Activated CD4-positive, alpha-beta memory T cell treated with anti-CD3 and anti-CD28 coated beads for 36 hours (primary cell): ENCODE measurements at regions of chr12 and their contacts with region 1.

Region 1: DNA sequence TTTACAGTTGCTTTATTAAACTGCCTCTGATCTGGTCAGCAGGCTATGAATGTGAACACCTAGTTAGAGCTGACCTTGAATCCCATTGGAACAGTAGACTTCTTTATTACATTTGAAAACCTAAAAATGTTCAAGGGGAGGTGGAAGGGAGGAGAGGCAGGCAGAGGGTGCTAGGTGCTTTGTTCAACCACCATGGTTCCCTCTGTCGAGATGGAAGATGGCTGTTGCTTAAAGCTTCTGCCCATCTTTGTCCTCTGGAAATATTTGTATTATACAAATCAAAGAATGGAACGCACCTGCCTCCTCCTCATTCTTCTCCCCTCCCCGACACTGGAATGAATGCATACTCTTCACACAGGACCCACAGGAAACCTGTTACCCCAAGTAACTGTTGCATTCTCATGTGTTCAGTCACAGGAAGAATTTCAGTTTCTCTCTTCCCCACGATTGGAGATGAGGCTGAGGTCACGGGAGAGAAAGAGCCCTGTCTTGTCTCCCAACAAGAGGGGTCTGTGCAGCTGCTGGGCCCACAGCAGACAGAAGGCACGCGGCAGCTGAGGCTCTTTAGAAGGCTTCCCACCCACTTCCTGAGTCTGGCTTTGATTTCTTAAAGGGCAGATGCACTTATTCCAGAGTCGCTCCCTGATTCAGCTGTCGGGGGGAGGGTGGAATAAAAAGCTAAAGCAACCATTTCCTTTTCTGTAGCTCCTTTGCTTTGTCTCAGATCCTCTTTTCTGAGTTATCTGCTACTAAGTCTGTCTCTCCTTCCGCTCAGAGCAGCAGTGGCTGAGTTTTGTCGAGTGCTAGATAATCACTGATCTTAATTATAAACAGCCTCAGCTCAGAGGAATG is 217.9 kb upstream of the BTG1 start:
- DNase-seq: peak; percentile 55
- H3K4me3 Mint-ChIP-seq: peak overlapping the region; percentile 74
- H3K27ac Mint-ChIP-seq: peak overlapping the region; percentile 87
- H3K4me1 Mint-ChIP-seq: peaks cover 56% of the 10 kb centered on the region
- H3K27me3 Mint-ChIP-seq: no peaks in the 10 kb centered on the region

Region 2: GRCh38 chr12:92185052-92185451 is 178.5 kb before region 1 on chr12:
- CTCF ChIA-PET with region 1: no interaction called
- POLR2A ChIA-PET with region 1: no interaction called
- intact Hi-C with region 1: no loop called
- DNase-seq: peak; percentile 49
- H3K4me3 Mint-ChIP-seq: no peak overlapping the region
- H3K27ac Mint-ChIP-seq: peak overlapping the region; percentile 47
- H3K4me1 Mint-ChIP-seq: peaks cover 46% of the 10 kb centered on the region
- H3K27me3 Mint-ChIP-seq: no peaks in the 10 kb centered on the region

Region 3: GRCh38 chr12:92218394-92219077 is 145.0 kb before region 1 on chr12:
- CTCF ChIA-PET with region 1: no interaction called
- POLR2A ChIA-PET with region 1: no interaction called
- intact Hi-C with region 1: loop called (anchors 1 kb)
- DNase-seq: no peak
- H3K4me3 Mint-ChIP-seq: no peak overlapping the region
- H3K27ac Mint-ChIP-seq: peak overlapping the region; percentile 74
- H3K4me1 Mint-ChIP-seq: peaks cover 23% of the 10 kb centered on the region
- H3K27me3 Mint-ChIP-seq: no peaks in the 10 kb centered on the region

Region 4: DNA sequence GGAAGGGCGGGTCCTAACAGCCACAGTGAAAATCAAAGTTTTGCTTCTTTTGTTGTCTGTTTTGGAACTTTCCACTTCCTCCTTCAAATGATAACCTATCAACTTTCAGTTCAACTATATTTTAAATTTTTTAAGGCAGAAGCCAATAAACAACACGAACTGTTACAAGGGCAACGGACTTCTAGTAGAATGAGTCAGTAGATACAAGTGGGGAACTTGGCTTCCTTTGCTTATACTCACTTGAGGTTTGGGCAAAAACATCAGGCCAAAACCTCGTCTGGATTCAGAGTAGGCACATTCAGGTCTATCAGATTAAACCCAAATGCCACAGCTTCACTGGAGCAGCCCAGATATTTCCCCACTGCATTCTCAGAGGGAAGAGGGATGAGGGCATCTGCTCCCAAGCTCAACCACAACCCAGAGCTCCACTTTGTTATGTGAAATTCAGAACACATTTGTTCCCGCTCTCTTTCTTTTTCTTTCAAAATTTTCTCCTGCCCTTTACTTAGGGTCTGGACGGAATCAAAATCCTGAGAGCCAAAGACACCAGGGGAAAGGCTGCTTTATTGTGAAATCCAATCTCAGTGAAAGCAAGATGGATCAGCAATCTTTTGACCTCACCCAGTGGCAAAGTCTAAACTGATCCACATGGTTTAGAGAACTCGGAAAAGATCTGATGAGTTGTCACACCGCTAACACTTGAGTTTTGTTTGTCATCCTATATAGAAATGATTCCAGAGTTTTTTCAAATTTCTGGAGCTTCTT is 65.4 kb before region 1 on chr12:
- CTCF ChIA-PET with region 1: no interaction called
- POLR2A ChIA-PET with region 1: no interaction called
- intact Hi-C with region 1: loop called (anchors 5 kb)
- DNase-seq: peak; percentile 26
- H3K4me3 Mint-ChIP-seq: peak overlapping the region; percentile 30
- H3K27ac Mint-ChIP-seq: peak overlapping the region; percentile 79
- H3K4me1 Mint-ChIP-seq: peaks cover 13% of the 10 kb centered on the region
- H3K27me3 Mint-ChIP-seq: no peaks in the 10 kb centered on the region

Region 5: GRCh38 chr12:92396647-92397252 is 33.2 kb after region 1 on chr12:
- CTCF ChIA-PET with region 1: no interaction called
- POLR2A ChIA-PET with region 1: interaction called, 6 read pairs
- intact Hi-C with region 1: loop called (anchors 1 kb)
- DNase-seq: peak; percentile 61
- H3K4me3 Mint-ChIP-seq: no peak overlapping the region
- H3K27ac Mint-ChIP-seq: peak overlapping the region; percentile 86
- H3K4me1 Mint-ChIP-seq: peaks cover 90% of the 10 kb centered on the region
- H3K27me3 Mint-ChIP-seq: no peaks in the 10 kb centered on the region

Region 6: GRCh38 chr12:92469837-92470236 is 106.3 kb after region 1 on chr12:
- CTCF ChIA-PET with region 1: no interaction called
- POLR2A ChIA-PET with region 1: no interaction called
- intact Hi-C with region 1: loop called (anchors 2 kb)
- DNase-seq: no peak
- H3K4me3 Mint-ChIP-seq: no peak overlapping the region
- H3K27ac Mint-ChIP-seq: peak overlapping the region; percentile 83
- H3K4me1 Mint-ChIP-seq: peaks cover 38% of the 10 kb centered on the region
- H3K27me3 Mint-ChIP-seq: no peaks in the 10 kb centered on the region

Region 7: DNA sequence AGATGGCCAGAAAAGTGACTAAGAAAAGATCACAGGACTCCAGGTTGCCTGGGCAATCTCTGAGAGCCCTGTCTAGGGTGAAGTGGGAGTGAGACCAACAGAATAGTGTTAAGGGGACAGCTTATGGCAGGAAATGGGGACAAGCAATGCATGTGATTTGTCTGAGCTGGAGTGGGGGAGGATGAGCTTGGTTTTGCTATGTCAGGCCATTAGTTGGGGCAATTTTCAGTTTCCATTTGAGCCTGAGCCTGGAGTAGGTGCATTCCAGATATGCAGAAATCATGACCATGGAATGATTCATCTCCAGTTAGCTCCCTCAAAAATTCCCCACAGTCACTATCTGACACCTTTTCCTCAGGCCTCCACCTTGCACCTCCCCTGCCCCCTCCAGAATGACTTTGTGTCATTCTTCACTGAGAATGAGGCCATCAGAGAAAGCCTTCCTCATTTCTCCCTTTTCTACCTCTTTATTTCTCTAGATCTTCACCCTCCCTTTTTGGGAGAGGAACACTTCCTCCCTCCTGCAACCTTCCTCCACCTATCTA is 188.4 kb after region 1 on chr12:
- CTCF ChIA-PET with region 1: no interaction called
- POLR2A ChIA-PET with region 1: no interaction called
- intact Hi-C with region 1: loop called (anchors 1 kb)
- DNase-seq: peak; percentile 75
- H3K4me3 Mint-ChIP-seq: no peak overlapping the region
- H3K27ac Mint-ChIP-seq: no peak overlapping the region
- H3K4me1 Mint-ChIP-seq: peaks cover 25% of the 10 kb centered on the region
- H3K27me3 Mint-ChIP-seq: no peaks in the 10 kb centered on the region

Region 8: DNA sequence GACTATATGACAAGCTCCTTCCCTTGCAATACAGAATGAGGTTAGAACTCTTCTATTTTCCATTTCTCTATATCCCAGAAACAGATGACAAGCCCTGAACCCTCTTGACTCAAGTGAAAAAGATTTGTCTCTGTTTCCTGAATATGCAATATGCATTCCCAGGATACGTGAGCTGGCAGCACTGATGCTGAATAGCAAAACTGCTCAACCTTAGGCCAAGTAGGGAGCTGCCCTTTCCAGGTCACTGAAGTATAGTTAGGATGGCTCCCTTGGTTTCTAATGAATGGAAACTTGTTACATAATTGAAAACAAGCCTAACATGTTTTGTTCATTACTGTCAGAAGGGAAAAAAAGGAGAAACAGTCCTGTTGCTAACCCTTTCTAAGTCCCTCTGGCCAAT is 291.4 kb after region 1 on chr12:
- CTCF ChIA-PET with region 1: no interaction called
- POLR2A ChIA-PET with region 1: no interaction called
- intact Hi-C with region 1: no loop called
- DNase-seq: no peak
- H3K4me3 Mint-ChIP-seq: no peak overlapping the region
- H3K27ac Mint-ChIP-seq: no peak overlapping the region
- H3K4me1 Mint-ChIP-seq: peaks cover 3% of the 10 kb centered on the region
- H3K27me3 Mint-ChIP-seq: no peaks in the 10 kb centered on the region